ENCODE measurements at regions of chr6 and their contacts with region 1.

Region 1: GRCh38 chr6:114304304-114304887 is 38.4 kb downstream of the HS3ST5 start:
- DNase-seq: no peak
- ATAC-seq: no peak
- H3K4me3 Mint-ChIP-seq: no peak overlapping the region
- H3K27ac Mint-ChIP-seq: no peak overlapping the region
- H3K4me1 Mint-ChIP-seq: peaks cover 8% of the 10 kb centered on the region
- H3K27me3 Mint-ChIP-seq: no peaks in the 10 kb centered on the region; the same call in 1 of the 2 replicates
- CTCF ChIP-seq: peak; percentile 32; the same call in 1 of the 2 replicates

Region 2: GRCh38 chr6:114144887-114145851 is 159.2 kb before region 1 on chr6:
- CTCF ChIA-PET with region 1: no interaction called
- POLR2A ChIA-PET with region 1: no interaction called
- DNase-seq: no peak
- ATAC-seq: peak; percentile 79
- H3K4me3 Mint-ChIP-seq: no peak overlapping the region
- H3K27ac Mint-ChIP-seq: peak overlapping the region; percentile 2
- H3K4me1 Mint-ChIP-seq: peaks cover 14% of the 10 kb centered on the region
- H3K27me3 Mint-ChIP-seq: no peaks in the 10 kb centered on the region
- CTCF ChIP-seq: no peak

Region 3: DNA sequence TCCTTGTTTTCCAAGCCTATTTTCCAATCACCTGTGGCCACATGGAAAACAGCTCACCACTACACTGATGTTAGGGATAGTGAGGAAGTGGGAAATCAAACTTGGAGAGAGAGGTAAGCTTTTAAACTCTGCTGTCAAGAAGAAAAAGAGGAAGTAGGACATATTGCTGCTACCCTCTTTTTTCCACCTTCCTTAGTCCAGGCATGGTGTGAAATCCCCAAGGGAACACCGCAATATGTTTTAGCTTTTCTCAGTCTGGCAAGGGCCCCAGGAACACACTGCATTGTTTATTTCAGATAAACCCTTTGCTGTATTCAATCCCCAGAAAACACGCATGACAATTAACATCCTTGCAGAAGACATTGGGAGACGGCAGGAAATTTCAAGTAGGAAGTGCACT is 22.9 kb before region 1 on chr6:
- CTCF ChIA-PET with region 1: interaction called, 18 read pairs
- POLR2A ChIA-PET with region 1: no interaction called
- DNase-seq: no peak
- ATAC-seq: peak; percentile 34
- H3K4me3 Mint-ChIP-seq: peak overlapping the region; percentile 33
- H3K27ac Mint-ChIP-seq: peak overlapping the region; percentile 94
- H3K4me1 Mint-ChIP-seq: peaks cover 73% of the 10 kb centered on the region
- H3K27me3 Mint-ChIP-seq: no peaks in the 10 kb centered on the region
- CTCF ChIP-seq: no peak

Region 4: DNA sequence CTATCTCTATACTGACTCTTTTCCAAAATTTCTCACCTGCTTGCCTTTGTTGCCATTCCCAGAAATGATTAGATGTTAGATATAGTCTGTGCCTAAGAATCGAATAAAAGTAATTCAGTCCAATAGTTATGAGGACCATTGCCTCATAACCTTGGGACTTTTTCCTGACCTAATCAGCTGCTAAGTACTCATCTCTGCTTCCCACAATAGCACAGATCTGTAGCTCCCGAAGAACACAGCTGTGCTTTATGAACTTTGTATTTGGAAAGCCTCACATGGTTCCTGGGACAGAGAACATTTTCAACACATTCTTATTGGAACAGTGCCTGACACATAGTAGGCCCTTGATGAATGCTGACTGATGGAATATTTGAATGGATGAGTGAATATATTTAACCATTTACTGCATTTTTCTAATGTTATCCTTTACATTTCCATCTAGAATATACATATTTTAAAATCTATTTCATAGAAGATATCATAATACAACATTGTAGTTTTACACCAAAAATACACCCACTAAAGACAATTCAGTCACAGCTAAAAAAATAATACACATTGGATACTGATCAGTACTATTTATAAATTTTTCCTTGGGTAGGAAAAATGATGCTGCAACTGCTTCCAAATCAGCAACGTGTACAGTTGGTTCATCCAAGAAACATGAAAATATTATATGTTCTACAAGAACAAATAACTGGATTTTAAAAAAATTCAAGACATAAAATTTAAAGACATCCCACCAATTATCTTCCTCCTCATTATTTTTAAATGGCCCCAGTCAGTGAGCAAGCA is 15.5 kb before region 1 on chr6:
- CTCF ChIA-PET with region 1: interaction called, 12 read pairs
- POLR2A ChIA-PET with region 1: no interaction called
- DNase-seq: no peak
- ATAC-seq: no peak
- H3K4me3 Mint-ChIP-seq: no peak overlapping the region
- H3K27ac Mint-ChIP-seq: peak overlapping the region; percentile 69
- H3K4me1 Mint-ChIP-seq: peaks cover 28% of the 10 kb centered on the region
- H3K27me3 Mint-ChIP-seq: no peaks in the 10 kb centered on the region
- CTCF ChIP-seq: no peak

Measured in WTC11 (cell line).